ENCODE measurements at regions of chr14 and their contacts with region 1.

Region 1: DNA sequence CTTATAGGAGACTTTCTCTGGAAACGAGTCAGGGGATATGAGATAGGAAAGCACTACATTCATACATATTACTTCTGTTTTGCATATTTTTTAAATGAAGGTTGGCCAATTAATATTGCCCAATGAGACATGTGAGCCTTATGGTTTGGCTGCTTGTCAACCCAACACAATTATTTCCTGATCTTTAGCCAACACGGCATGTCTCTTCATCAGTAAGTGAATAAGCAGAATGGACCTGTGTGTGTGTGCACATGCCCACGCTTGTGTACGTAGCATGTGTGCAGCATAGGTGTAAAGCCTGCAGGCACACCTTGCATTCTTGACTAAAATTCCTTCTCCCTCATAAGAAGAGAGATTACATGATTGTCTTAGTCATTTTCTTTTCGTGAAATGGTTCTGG is 88.3 kb downstream of the STON2 start:
- DNase-seq: no peak
- ATAC-seq: no peak
- H3K4me3 ChIP-seq: no peak overlapping the region
- H3K27ac ChIP-seq: no peak overlapping the region
- H3K4me1 ChIP-seq: peaks cover 12 to 25% of the 10 kb centered on the region in 2 donors
- H3K27me3 ChIP-seq: no peaks in the 10 kb centered on the region
- CTCF ChIP-seq: no peak
- POLR2A ChIP-seq: no peak

Region 2: DNA sequence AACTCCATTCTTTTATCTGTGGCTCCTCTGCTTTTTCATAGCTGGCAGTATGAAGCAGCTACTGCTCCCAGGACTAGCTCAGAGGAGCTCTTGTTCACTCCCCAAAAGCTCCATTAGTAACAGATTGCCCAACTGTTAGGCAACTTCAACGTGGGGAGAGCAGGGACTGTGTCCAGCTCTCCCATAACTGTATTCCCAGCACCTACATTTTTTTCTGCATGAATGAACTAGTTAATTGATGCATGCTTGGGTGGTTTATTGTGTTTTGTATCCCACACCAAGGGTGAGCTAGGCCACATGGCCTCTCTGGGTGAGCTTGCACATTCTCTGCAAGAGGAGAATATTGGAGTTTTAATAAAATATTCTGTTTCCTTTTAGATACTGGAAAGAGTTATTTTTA is 73.1 kb after region 1 on chr14:
- in situ Hi-C with region 1: no loop called
- intact Hi-C with region 1: loop called (anchors 5 kb)
- DNase-seq: no peak
- ATAC-seq: peak in 1 of 2 donors; percentile 75
- H3K4me3 ChIP-seq: no peak overlapping the region
- H3K27ac ChIP-seq: no peak overlapping the region
- H3K4me1 ChIP-seq: no peaks in the 10 kb centered on the region
- H3K27me3 ChIP-seq: no peaks in the 10 kb centered on the region
- CTCF ChIP-seq: no peak
- POLR2A ChIP-seq: no peak